ENCODE measurements at regions of chr4 and their contacts with region 1.

Region 1: GRCh38 chr4:99117876-99118693 is 26.0 kb downstream of the ADH4 start:
- DNase-seq: no peak

Region 2: DNA sequence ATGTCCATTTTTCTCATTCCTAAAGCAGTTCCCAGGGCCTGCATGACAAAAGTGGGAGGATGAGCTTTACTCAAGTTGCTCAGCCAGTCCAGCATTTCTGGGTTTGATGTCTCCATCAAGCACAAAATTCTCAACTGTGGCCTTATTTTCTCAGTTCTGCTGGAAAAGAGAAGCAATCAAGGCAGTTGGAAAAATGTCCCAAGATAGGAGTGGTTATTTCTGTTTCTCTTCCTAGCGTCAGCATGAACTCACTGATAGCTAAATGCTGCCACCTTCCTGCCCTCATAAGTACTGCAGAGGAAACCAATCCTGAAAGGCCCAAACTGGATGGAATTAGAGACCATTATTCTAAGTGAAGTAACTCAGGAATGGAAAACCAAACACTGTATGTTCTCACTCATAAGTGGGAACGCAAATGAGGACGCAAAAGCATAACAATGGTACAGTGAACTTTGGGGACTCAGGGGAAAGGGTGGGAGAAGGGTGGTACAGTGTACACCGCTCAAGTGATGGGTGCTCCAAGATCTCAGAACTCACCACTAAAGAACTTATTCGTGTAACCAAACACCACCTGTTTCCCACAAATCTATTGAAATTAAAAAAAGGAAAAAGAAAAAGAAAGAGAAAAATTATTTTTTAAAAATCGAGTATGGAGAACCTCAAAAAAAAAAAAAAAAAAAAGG is 287.5 kb after region 1 on chr4:
- intact Hi-C with region 1: loop called (anchors 1 kb)
- DNase-seq: peak in 7 of 10 donors; percentile 42 to 84 (median 69)

Region 3: DNA sequence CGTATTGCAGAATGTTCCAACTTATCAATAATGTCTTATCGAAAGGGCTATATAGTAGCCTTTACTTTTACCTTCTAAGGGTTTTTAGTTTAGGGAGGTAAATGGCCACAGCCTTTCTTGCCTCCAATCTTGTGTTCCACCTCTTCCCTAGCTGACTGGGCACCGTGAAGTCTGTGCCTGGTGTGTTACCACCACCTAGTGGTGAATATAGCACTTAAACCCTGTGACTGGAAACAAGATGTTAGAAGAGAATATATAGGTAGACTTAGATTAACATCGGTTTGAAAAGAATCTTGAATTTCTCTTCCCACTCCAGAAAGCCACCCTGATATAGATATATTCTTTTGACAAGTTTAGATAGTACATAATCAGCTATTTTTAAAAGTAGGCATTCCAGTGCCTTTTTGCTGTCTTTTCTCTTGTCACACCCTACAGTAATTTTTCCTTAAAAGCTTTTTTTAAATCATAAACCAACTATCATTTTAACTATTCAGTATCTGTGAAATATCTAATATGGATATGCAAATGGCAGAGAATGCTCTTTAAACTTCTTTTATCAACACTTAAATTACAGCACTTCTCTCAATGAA is 344.9 kb after region 1 on chr4:
- intact Hi-C with region 1: loop called (anchors 2 kb)
- DNase-seq: peak; percentile 19 to 92 (median 56)

Measured in posterior cingulate gyrus (tissue), 11 donors.